Panc1 (cell line): ENCODE measurements at regions of chr13 and their contacts with region 1.

Region 1: DNA sequence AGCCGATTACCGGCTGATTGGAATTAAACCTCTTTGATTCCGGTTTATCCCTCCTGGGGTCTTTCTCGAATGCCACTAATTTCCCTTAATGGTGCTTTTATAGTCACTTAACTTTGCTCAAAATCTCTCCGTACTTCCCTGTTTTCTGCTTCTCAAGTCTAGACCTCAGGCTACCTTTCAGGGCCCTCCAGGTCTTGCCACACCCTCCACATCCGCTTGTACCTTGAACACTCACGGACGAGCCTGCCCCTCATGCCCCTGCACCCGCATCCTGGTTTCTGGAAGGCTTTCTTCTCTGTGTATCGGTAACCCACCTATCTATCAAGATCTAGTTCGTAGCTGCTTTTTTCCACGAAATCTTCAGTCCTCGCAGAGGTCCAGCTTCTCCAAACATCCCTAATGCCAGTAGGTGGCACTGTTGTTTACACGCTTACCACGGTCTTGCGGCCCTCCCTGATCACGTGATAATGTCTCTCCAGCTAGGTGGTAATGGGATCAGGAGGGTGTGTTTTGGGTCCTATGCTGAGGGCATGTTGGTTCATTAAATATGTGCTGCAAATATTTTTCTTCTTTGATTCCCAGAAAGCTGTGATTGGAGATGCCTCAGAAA is 13.8 kb downstream of the ATP12A start:
- DNase-seq: no peak
- ATAC-seq: peak; percentile 88
- H3K4me3 ChIP-seq: no peak overlapping the region
- H3K27ac ChIP-seq: no peak overlapping the region
- H3K4me1 ChIP-seq: no peaks in the 10 kb centered on the region
- H3K27me3 ChIP-seq: no peaks in the 10 kb centered on the region
- CTCF ChIP-seq: peak; percentile 76

Region 2: GRCh38 chr13:24727731-24728601 is 34.0 kb after region 1 on chr13:
- CTCF ChIA-PET with region 1: interaction called, 15 read pairs
- POLR2A ChIA-PET with region 1: no interaction called
- in situ Hi-C with region 1: no loop called
- intact Hi-C with region 1: loop called (anchors 5 kb)
- DNase-seq: peak; percentile 47
- ATAC-seq: peak; percentile 99
- H3K4me3 ChIP-seq: peak overlapping the region in 1 of 2 experiments; percentile 8; a peak in 1 of 4 replicates
- H3K27ac ChIP-seq: no peak overlapping the region
- H3K4me1 ChIP-seq: no peaks in the 10 kb centered on the region
- H3K27me3 ChIP-seq: no peaks in the 10 kb centered on the region
- CTCF ChIP-seq: peak; percentile 87